ENCODE measurements at regions of chr9 and their contacts with region 1.

Region 1: GRCh38 chr9:33225319-33226149 is 14.4 kb upstream of the SPINK4 start:
- DNase-seq: peak in 1 of 3 donors; percentile 67
- ATAC-seq: peak; percentile 25 to 36
- H3K4me3 ChIP-seq: no peak overlapping the region
- H3K27ac ChIP-seq: no peak overlapping the region
- H3K4me1 ChIP-seq: no peaks in the 10 kb centered on the region
- H3K27me3 ChIP-seq: no peaks in the 10 kb centered on the region

Region 2: DNA sequence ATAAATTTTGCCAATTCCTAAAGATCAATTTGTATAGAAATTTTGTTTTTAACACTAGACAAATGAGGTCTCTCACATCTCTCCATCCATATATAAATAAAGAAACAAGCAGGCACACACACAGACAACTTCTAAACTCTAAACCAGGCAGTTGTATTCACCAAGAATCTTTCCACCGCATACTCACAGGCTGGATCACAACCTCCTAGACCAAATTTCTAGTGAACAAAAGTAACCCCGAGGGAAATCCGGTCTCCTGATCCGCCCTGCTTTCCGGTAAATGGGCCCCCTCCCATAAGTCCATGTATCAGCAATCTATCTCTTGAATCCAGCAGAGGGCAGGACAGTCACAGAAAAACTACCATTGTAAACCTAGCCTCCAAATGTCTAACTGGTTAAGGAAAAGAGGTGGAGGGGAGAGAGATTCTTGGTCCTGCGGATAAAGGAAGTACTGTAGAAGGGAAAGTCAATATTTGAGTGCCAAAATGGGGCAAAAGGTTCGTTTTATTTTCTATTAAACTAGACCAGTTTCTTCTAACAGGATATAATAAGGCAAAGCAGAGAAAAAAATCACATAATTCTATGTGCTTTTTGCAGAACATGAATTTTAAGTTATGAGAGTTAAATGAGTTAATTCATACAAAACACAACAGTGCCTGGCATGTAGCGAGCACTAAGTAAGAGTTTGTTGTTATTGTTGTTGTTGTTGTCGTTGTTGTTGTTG is 144.2 kb before region 1 on chr9:
- intact Hi-C with region 1: loop called (anchors 1 to 5 kb)
- DNase-seq: peak in 2 of 3 donors; percentile 64 to 78
- ATAC-seq: peak; percentile 72 to 78
- H3K4me3 ChIP-seq: no peak overlapping the region
- H3K27ac ChIP-seq: no peak overlapping the region
- H3K4me1 ChIP-seq: no peaks in the 10 kb centered on the region
- H3K27me3 ChIP-seq: no peaks in the 10 kb centered on the region

Region 3: DNA sequence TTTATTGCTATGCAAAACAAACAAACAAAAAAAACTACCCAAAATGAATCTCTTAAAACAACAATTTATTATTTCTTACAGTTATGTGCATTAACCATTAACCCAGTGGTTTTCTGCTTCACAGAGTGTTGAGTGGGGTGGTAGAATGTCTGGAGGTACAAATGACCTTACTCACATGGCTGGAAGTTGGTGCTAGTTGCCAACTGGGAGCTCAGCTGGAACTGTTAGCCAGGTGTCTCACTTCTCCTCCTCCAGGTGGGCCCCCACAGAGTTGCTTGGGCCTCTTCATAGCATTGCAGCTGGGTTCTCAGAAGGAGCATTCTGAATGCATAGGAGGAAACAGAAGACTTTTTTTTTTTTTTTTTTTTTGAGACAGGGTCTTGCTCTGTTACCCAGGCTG is 47.9 kb before region 1 on chr9:
- intact Hi-C with region 1: loop called in 2 of 4 experiments (anchors 5 kb)
- DNase-seq: no peak
- ATAC-seq: no peak
- H3K4me3 ChIP-seq: no peak overlapping the region
- H3K27ac ChIP-seq: no peak overlapping the region
- H3K4me1 ChIP-seq: peaks cover 6% of the 10 kb centered on the region
- H3K27me3 ChIP-seq: no peaks in the 10 kb centered on the region